Body of pancreas (tissue), 4 donors: ENCODE measurements at regions of chr3 and their contacts with region 1.

Region 1: GRCh38 chr3:13091898-13092611 is 18.8 kb upstream of the IQSEC1 start:
- DNase-seq: peak; percentile 93 to 96 (median 94)
- ATAC-seq: peak; percentile 89
- H3K4me3 ChIP-seq: no peak overlapping the region
- H3K27ac ChIP-seq: peak overlapping the region in 3 of 4 donors; percentile 10 to 12 (median 11)
- H3K4me1 ChIP-seq: peaks cover 10% of the 10 kb centered on the region
- H3K27me3 ChIP-seq: no peaks in the 10 kb centered on the region
- CTCF ChIP-seq: peak; percentile 93 to 97 (median 95)
- POLR2A ChIP-seq: no peak

Region 2: GRCh38 chr3:13282986-13283876 is 191.2 kb after region 1 on chr3:
- intact Hi-C with region 1: loop called (anchors 10 kb)
- DNase-seq: peak in 3 of 4 donors; percentile 33 to 53 (median 35)
- ATAC-seq: peak; percentile 31
- H3K4me3 ChIP-seq: peak overlapping the region in 1 of 2 donors; percentile 19
- H3K27ac ChIP-seq: no peak overlapping the region
- H3K4me1 ChIP-seq: peaks cover 18% of the 10 kb centered on the region
- H3K27me3 ChIP-seq: no peaks in the 10 kb centered on the region
- CTCF ChIP-seq: peak in 5 of 7 experiments; percentile 15 to 48 (median 18)
- POLR2A ChIP-seq: no peak

Region 3: GRCh38 chr3:13455644-13456043 is 363.6 kb after region 1 on chr3:
- intact Hi-C with region 1: loop called (anchors 5 kb)
- DNase-seq: no peak
- ATAC-seq: no peak
- H3K4me3 ChIP-seq: no peak overlapping the region
- H3K27ac ChIP-seq: no peak overlapping the region
- H3K4me1 ChIP-seq: peaks cover 11% of the 10 kb centered on the region
- H3K27me3 ChIP-seq: no peaks in the 10 kb centered on the region
- CTCF ChIP-seq: no peak
- POLR2A ChIP-seq: no peak

Region 4: GRCh38 chr3:13648060-13649001 is 556.3 kb after region 1 on chr3:
- intact Hi-C with region 1: loop called (anchors 5 kb)
- DNase-seq: peak; percentile 78 to 88 (median 84)
- ATAC-seq: peak; percentile 82
- H3K4me3 ChIP-seq: no peak overlapping the region
- H3K27ac ChIP-seq: no peak overlapping the region
- H3K4me1 ChIP-seq: peaks cover 12% of the 10 kb centered on the region
- H3K27me3 ChIP-seq: peaks cover 0 to 7% of the 10 kb centered on the region in 2 donors
- CTCF ChIP-seq: peak; percentile 96 to 98 (median 97)
- POLR2A ChIP-seq: no peak

Region 5: GRCh38 chr3:13708301-13708700 is 616.2 kb after region 1 on chr3:
- intact Hi-C with region 1: no loop called
- DNase-seq: peak in 1 of 4 donors; percentile 3
- ATAC-seq: no peak
- H3K4me3 ChIP-seq: no peak overlapping the region
- H3K27ac ChIP-seq: no peak overlapping the region
- H3K4me1 ChIP-seq: no peaks in the 10 kb centered on the region
- H3K27me3 ChIP-seq: no peaks in the 10 kb centered on the region
- CTCF ChIP-seq: no peak
- POLR2A ChIP-seq: no peak